ENCODE measurements at regions of chr11 and their contacts with region 1.

Region 1: DNA sequence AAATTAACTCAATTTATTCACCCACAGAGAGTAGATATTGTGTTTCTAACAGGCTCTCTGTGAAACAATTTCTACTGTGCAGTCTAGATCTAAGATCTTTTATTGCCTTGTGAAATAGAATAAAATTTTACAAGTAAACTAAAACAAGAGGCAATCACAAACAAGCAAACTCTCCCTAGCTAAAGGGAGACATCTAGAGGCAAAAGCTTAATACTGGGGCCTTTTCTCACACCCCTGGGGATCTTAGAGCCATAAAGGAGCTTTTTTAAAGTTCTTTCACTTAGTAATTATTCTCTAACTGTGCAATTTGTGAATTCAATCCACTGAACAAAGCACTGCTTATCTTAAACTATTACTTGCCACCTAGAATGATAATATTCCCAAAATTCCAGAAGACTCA is 19.7 kb downstream of the ALG9 start:
- DNase-seq: no peak
- ATAC-seq: no peak
- H3K4me3 ChIP-seq: no peak overlapping the region
- H3K27ac ChIP-seq: no peak overlapping the region
- H3K4me1 ChIP-seq: no peaks in the 10 kb centered on the region
- H3K27me3 ChIP-seq: no peaks in the 10 kb centered on the region
- CTCF ChIP-seq: peak; percentile 66; the same call in 1 of the 2 replicates

Region 2: DNA sequence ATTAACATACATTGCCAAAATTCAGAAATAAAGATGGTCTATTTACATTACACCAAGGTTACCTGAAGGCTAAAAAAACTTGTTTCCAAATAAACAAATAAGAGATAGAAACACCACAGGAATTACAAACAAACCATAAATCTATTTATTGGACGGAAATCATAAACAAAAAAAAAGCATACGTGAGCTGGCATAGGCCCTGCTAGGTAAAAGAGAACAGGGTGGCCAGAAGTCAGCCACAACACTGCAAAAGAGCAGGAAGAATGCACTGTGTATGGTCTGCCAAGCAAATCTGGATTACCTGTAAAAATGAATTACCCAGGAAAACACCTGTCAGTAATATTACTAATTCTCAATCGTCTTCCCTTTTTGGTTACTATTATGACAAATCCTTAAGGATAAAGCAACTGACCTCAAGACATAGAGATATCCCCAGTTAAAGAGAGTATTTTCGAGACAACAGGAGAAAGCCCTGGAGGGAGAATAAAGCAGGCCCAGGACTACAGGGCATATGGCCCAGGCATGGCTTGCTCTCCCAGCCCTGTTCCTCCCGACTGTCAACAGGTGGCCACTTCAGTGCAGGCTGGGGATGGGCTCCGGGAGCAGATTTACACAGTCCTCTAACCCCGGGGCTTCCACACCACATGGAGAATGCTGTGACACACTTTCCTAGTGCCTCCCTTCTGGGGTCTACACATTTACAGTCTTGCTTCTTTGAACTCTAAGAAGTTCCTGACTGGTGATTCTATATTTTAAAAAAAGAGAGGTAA is 103.4 kb before region 1 on chr11:
- CTCF ChIA-PET with region 1: no interaction called
- POLR2A ChIA-PET with region 1: no interaction called
- in situ Hi-C with region 1: no loop called
- intact Hi-C with region 1: no loop called
- DNase-seq: no peak
- ATAC-seq: peak; percentile 68
- H3K4me3 ChIP-seq: no peak overlapping the region
- H3K27ac ChIP-seq: no peak overlapping the region
- H3K4me1 ChIP-seq: peaks cover 5% of the 10 kb centered on the region; the same call in 1 of the 2 replicates
- H3K27me3 ChIP-seq: no peaks in the 10 kb centered on the region
- CTCF ChIP-seq: no peak

Region 3: GRCh38 chr11:111811445-111811844 is 40.2 kb before region 1 on chr11:
- CTCF ChIA-PET with region 1: interaction called, 12 read pairs
- POLR2A ChIA-PET with region 1: no interaction called
- in situ Hi-C with region 1: no loop called
- intact Hi-C with region 1: no loop called
- DNase-seq: no peak
- ATAC-seq: no peak
- H3K4me3 ChIP-seq: no peak overlapping the region
- H3K27ac ChIP-seq: no peak overlapping the region
- H3K4me1 ChIP-seq: no peaks in the 10 kb centered on the region
- H3K27me3 ChIP-seq: no peaks in the 10 kb centered on the region
- CTCF ChIP-seq: no peak

Region 4: DNA sequence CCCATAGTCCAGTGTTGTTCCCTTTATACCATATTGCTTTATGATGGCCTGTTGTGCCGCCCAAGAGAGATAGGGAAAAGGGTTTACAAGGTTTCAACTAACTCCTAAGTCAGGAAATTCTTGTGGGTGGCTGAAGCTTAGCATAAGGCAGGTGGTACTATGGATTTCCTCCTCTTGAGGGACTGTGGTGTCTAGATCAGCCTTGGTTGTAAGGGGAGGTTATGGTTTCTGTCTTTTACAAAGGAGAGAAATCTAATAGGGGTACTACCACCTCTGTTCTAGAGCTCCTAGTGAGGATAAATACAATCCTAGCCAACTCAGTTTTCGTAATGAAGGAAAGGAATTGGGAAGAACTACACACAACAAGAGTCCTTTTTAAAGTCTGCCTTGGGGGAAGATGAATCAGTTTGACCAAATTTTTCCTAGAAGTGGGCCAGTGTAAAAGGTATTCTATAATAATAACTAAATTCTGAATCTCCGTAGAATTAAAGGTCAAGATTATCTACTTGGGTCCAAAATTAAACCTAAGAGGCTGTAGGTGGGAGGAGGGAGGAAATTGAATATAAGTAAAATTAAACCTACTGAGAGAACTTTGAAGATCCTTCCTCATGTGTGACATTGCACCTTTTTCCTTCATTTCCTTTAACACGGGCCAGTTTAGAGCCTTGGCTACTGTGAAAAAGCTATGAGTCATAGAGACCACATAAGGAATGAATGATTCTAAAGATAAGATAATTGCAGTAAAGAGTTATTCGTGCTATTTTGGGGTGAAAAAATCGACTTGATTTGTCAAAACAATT is 190.7 kb after region 1 on chr11:
- CTCF ChIA-PET with region 1: no interaction called
- POLR2A ChIA-PET with region 1: no interaction called
- in situ Hi-C with region 1: no loop called
- intact Hi-C with region 1: no loop called
- DNase-seq: no peak
- ATAC-seq: no peak
- H3K4me3 ChIP-seq: no peak overlapping the region
- H3K27ac ChIP-seq: no peak overlapping the region
- H3K4me1 ChIP-seq: no peaks in the 10 kb centered on the region
- H3K27me3 ChIP-seq: no peaks in the 10 kb centered on the region
- CTCF ChIP-seq: no peak

Measured in Panc1 (cell line).